ENCODE measurements at regions of chr10 and their contacts with region 1.

Region 1: GRCh38 chr10:50988792-50989191 is 85.5 kb upstream of the PRKG1 start:
- DNase-seq: no peak
- H3K4me3 ChIP-seq: peak overlapping the region; percentile 46 to 95
- H3K27ac ChIP-seq: peak overlapping the region in 1 of 2 donors; percentile 38
- H3K4me1 ChIP-seq: peaks cover 0 to 3% of the 10 kb centered on the region in 2 donors
- H3K27me3 ChIP-seq: no peaks in the 10 kb centered on the region
- CTCF ChIP-seq: peak in 2 of 3 experiments; percentile 67 to 71

Region 2: DNA sequence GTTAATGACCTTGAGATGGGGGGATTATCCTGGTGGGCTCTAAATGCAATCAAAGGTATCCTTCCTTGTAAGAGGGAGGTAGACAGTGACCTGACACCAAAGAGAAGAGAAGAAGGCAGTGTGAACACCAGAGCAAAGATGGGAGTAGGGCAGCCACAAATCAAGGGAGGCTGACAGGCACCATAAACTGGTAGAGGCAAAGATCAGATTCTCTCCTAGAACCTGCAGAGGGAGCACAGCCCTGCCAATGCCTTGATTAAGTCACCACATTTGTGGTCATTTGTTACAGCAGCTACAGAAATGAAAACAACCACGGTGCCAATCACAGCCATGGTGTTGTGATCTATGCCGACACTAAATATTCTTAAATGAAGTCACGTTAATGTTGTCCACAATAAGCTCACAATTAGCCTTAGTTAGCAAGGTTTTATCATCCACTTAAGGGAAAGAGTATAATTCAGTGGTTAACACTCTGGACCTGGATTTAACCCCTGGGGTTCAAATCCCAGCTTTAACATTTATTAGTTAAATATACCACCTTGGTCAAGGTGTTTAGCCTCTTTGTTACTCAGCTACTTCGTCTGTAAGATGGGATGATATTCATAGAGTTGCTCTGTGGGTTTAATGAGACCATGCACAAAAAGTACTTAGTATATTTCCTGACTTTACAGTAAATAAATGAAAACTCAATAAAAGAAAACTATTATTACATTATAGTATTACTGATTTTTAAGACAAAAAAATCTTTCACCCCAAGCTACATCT is 435.8 kb before region 1 on chr10:
- intact Hi-C with region 1: loop called (anchors 5 kb)
- DNase-seq: no peak
- H3K4me3 ChIP-seq: no peak overlapping the region
- H3K27ac ChIP-seq: peak overlapping the region; percentile 69 to 72
- H3K4me1 ChIP-seq: peaks cover 14 to 55% of the 10 kb centered on the region in 2 donors
- H3K27me3 ChIP-seq: no peaks in the 10 kb centered on the region
- CTCF ChIP-seq: peak in 1 of 3 experiments; percentile 30

Region 3: GRCh38 chr10:50961297-50961696 is 27.5 kb before region 1 on chr10:
- intact Hi-C with region 1: no loop called
- DNase-seq: no peak
- H3K4me3 ChIP-seq: no peak overlapping the region
- H3K27ac ChIP-seq: no peak overlapping the region
- H3K4me1 ChIP-seq: no peaks in the 10 kb centered on the region
- H3K27me3 ChIP-seq: no peaks in the 10 kb centered on the region
- CTCF ChIP-seq: no peak

Region 4: GRCh38 chr10:51950371-51950995 is 961.7 kb after region 1 on chr10:
- intact Hi-C with region 1: loop called (anchors 5 kb)
- DNase-seq: no peak
- H3K4me3 ChIP-seq: no peak overlapping the region
- H3K27ac ChIP-seq: peak overlapping the region; percentile 62 to 72
- H3K4me1 ChIP-seq: peaks cover 3 to 29% of the 10 kb centered on the region in 2 donors
- H3K27me3 ChIP-seq: no peaks in the 10 kb centered on the region
- CTCF ChIP-seq: no peak

Region 5: DNA sequence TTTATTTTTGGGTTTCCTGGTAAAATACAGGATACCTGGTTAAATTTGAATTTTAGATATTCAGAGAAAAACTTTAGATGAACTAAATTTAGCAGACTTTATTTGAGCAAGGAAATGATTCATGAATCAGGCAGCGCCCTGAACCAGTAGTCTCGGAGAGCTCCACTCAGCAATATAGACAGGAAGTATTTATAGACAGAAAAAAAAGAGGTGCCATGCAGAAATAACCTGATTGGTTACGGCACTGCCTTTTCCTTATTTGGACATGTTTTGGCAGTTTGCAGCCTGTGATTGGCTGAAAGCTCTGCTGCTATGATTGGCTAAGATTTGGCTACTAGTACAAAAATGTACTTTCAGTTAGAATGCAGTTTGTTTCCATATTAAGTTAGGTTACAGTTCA is 1127.0 kb after region 1 on chr10:
- intact Hi-C with region 1: loop called (anchors 10 kb)
- DNase-seq: no peak
- H3K4me3 ChIP-seq: peak overlapping the region in 1 of 2 donors; percentile 4
- H3K27ac ChIP-seq: peak overlapping the region; percentile 61 to 67
- H3K4me1 ChIP-seq: peaks cover 0 to 22% of the 10 kb centered on the region in 2 donors
- H3K27me3 ChIP-seq: no peaks in the 10 kb centered on the region
- CTCF ChIP-seq: no peak

Region 6: DNA sequence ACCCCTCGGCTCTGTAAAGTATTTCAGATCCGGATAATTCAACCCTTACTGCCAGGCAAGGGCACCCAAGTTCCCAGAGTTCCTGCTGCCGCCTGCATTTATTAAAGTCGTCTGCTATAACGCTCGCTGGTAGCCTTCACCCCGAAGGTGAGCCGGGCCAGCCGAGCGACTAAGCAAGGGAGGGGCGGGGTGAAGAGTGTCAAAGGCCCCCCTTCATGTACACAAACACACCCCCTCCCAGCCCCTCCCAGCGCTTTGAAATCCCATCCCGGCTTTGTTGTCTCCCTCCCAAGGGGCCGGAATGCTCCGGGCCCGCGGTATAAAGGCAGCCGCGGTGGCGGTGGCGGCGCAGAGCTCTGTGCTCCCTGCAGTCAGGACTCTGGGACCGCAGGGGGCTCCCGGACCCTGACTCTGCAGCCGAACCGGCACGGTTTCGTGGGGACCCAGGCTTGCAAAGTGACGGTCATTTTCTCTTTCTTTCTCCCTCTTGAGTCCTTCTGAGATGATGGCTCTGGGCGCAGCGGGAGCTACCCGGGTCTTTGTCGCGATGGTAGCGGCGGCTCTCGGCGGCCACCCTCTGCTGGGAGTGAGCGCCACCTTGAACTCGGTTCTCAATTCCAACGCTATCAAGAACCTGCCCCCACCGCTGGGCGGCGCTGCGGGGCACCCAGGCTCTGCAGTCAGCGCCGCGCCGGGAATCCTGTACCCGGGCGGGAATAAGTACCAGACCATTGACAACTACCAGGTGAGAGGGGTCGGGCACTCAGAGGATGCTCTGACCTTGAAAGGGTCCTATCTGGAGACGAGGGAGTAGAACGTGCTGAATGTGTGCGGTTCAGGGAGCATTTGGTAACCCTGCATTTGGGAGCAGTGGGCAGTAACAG is 1325.4 kb after region 1 on chr10 and contains the start of gene DKK1:
- intact Hi-C with region 1: loop called (anchors 10 kb)
- DNase-seq: peak in 1 of 2 donors; percentile 75
- H3K4me3 ChIP-seq: peak within 1 kb of the TSS; percentile 58 to 68
- H3K27ac ChIP-seq: no peak within 1 kb of the TSS
- H3K4me1 ChIP-seq: peaks cover 5 to 16% of the 10 kb centered on the region in 2 donors
- H3K27me3 ChIP-seq: no peaks in the 10 kb centered on the region
- CTCF ChIP-seq: peak; percentile 52 to 69 (median 55)
- total RNA-seq, gene DKK1: 1.6 TPM